ENCODE measurements at regions of chr14 and their contacts with region 1.

Region 1: GRCh38 chr14:100375963-100376735 is 53.0 kb downstream of the SLC25A47 start:
- DNase-seq: peak; percentile 94
- H3K4me3 Mint-ChIP-seq: peak within 1 kb of the TSS; percentile 72
- H3K27ac Mint-ChIP-seq: peak within 1 kb of the TSS; percentile 95
- H3K4me1 Mint-ChIP-seq: peaks cover 44% of the 10 kb centered on the region
- H3K27me3 Mint-ChIP-seq: no peaks in the 10 kb centered on the region
- CTCF ChIP-seq: no peak

Region 2: GRCh38 chr14:100159094-100159864 is 216.9 kb before region 1 on chr14 and contains the start of gene DEGS2:
- CTCF ChIA-PET with region 1: no interaction called
- POLR2A ChIA-PET with region 1: no interaction called
- intact Hi-C with region 1: no loop called
- DNase-seq: no peak
- H3K4me3 Mint-ChIP-seq: no peak within 1 kb of the TSS
- H3K27ac Mint-ChIP-seq: no peak within 1 kb of the TSS
- H3K4me1 Mint-ChIP-seq: no peaks in the 10 kb centered on the region
- H3K27me3 Mint-ChIP-seq: no peaks in the 10 kb centered on the region
- CTCF ChIP-seq: no peak
- total RNA-seq, gene DEGS2: 0.07 and 0.39 TPM in 2 replicates

Region 3: DNA sequence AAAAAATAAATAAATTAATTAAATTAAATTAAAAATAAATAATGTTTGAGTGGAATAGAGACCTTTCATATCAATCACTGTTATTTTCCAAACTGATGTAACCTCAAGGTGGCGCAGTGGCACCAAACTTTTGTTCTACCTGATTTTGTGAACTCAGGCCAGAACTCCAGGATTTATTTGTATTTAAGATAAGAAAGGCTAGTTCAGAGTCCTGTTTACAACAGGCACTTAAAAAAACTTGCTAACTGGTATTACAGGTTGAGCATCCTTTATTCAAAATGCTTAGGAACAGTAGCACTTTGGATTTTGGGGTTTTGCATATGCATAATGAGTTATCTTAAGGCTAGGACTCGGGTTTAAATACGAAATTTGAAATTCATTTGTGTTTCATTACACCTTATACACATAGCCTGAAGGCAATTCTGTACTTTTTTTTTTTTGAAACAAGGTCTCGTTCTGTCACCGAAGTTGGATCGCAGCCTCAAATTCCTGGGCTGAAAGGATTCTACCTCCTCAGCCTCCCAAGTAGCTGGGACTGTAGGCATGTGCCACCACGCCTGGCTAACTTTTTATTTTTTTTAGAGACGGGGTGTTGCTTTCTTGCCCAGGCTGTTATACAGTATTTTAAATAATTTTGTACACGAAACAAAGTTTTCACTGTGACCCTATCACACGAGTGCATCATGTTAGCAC is 104.8 kb before region 1 on chr14:
- CTCF ChIA-PET with region 1: interaction called, 4 read pairs
- POLR2A ChIA-PET with region 1: interaction called, 3 read pairs
- intact Hi-C with region 1: loop called (anchors 2 kb)
- DNase-seq: peak; percentile 55
- H3K4me3 Mint-ChIP-seq: no peak overlapping the region
- H3K27ac Mint-ChIP-seq: no peak overlapping the region
- H3K4me1 Mint-ChIP-seq: peaks cover 17% of the 10 kb centered on the region
- H3K27me3 Mint-ChIP-seq: no peaks in the 10 kb centered on the region
- CTCF ChIP-seq: peak; percentile 40

Region 4: DNA sequence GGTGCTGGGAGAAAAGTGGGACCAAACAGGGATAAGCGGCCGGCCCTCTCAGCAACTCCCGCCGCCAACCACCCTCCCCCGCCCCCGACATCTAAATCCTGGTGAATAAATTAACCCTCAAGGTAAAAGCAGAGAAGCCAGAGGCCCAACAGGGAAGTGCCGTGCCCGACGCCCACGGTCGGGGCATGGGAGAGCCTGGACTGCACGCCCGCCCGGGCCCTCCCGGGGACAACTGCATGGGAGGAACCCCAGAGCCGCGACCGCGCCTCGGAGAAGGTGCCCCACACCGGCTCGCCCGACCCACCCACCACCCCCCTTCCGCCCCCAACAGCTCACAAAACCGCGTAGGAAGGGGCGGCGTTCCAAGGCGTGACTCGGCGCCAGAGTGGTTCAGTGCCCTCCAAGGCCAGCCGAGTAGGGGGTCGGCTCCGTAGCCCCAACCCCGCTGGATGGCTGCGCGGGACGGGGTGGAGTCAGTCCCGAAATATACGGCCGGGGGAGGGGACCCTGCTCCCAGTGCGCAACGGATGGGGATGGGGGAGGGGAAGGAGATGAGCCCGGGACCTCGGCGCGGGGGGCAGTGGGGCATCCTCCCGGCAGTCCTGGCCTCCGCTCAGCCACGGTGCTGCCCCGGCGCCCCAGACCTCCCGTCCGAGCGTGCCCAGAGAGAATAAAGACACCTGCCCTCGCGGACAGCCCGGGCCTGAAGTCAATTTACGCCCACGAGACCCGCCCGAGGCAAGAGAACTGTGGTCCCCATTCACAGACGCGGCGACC is 70.6 kb before region 1 on chr14:
- CTCF ChIA-PET with region 1: interaction called, 6 read pairs
- POLR2A ChIA-PET with region 1: interaction called, 9 read pairs
- intact Hi-C with region 1: loop called (anchors 2 kb)
- DNase-seq: no peak
- H3K4me3 Mint-ChIP-seq: peak overlapping the region; percentile 87
- H3K27ac Mint-ChIP-seq: no peak overlapping the region
- H3K4me1 Mint-ChIP-seq: peaks cover 32% of the 10 kb centered on the region
- H3K27me3 Mint-ChIP-seq: no peaks in the 10 kb centered on the region
- CTCF ChIP-seq: no peak

Measured in MCF 10A (cell line).